ENCODE measurements at regions of chr4 and their contacts with region 1.

Region 1: DNA sequence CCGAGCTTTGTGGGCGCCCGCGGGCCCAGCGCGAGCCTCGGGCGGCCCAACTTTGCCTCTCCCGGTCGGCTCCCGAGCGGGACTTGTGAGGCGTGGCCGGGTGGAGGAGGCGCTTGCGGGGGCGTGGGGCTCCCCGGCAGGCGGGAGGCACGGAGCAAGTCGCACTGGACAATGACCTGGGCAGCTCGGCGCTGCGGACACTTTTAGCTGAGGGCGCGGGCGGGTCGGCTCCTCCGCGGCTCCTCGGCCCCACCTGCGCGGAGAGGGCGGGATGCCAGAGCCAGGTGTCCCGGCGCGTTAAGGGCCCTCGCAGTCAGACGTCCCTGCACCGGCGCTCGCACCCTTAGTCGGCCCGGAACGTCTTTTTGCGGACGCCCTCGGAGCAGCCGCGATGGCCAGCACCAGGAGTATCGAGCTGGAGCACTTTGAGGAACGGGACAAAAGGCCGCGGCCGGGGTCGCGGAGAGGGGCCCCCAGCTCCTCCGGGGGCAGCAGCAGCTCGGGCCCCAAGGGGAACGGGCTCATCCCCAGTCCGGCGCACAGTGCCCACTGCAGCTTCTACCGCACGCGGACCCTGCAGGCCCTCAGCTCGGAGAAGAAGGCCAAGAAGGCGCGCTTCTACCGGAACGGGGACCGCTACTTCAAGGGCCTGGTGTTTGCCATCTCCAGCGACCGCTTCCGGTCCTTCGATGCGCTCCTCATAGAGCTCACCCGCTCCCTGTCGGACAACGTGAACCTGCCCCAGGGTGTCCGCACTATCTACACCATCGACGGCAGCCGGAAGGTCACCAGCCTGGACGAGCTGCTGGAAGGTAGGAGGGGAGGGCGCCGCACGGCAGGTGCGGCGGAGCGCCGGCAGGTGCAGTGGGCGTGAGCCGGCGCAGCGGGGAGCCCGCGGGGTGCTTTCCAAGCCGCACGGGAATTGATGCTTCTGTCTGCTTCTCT is 664 bp downstream of the DCLK2 start:
- DNase-seq: peak in 2 of 9 experiments; percentile 3 to 7
- ATAC-seq: no peak
- H3K4me3 ChIP-seq: no peak overlapping the region
- H3K4me3 Mint-ChIP-seq: peak overlapping the region; percentile 67
- H3K27ac ChIP-seq: no peak overlapping the region
- H3K27ac Mint-ChIP-seq: no peak overlapping the region
- H3K4me1 ChIP-seq: no peaks in the 10 kb centered on the region
- H3K4me1 Mint-ChIP-seq: peaks cover 2% of the 10 kb centered on the region
- H3K27me3 ChIP-seq: peaks cover 5 to 6% of the 10 kb centered on the region in 2 experiments
- H3K27me3 Mint-ChIP-seq: peaks cover 41% of the 10 kb centered on the region
- CTCF ChIP-seq: no peak

Region 2: GRCh38 chr4:150044517-150044916 is 34.4 kb before region 1 on chr4:
- CTCF ChIA-PET with region 1: no interaction called
- POLR2A ChIA-PET with region 1: no interaction called
- intact Hi-C with region 1: loop called in 1 of 2 experiments (anchors 1 kb)
- DNase-seq: no peak
- ATAC-seq: no peak
- H3K4me3 ChIP-seq: no peak overlapping the region
- H3K4me3 Mint-ChIP-seq: no peak overlapping the region
- H3K27ac ChIP-seq: no peak overlapping the region
- H3K27ac Mint-ChIP-seq: no peak overlapping the region
- H3K4me1 ChIP-seq: no peaks in the 10 kb centered on the region
- H3K4me1 Mint-ChIP-seq: no peaks in the 10 kb centered on the region
- H3K27me3 ChIP-seq: no peaks in the 10 kb centered on the region
- H3K27me3 Mint-ChIP-seq: no peaks in the 10 kb centered on the region
- CTCF ChIP-seq: no peak